Activated CD8-positive, alpha-beta T cell treated with anti-CD3 and anti-CD28 coated beads for 36 hours (primary cell): ENCODE measurements at regions of chr17 and their contacts with region 1.

Region 1: DNA sequence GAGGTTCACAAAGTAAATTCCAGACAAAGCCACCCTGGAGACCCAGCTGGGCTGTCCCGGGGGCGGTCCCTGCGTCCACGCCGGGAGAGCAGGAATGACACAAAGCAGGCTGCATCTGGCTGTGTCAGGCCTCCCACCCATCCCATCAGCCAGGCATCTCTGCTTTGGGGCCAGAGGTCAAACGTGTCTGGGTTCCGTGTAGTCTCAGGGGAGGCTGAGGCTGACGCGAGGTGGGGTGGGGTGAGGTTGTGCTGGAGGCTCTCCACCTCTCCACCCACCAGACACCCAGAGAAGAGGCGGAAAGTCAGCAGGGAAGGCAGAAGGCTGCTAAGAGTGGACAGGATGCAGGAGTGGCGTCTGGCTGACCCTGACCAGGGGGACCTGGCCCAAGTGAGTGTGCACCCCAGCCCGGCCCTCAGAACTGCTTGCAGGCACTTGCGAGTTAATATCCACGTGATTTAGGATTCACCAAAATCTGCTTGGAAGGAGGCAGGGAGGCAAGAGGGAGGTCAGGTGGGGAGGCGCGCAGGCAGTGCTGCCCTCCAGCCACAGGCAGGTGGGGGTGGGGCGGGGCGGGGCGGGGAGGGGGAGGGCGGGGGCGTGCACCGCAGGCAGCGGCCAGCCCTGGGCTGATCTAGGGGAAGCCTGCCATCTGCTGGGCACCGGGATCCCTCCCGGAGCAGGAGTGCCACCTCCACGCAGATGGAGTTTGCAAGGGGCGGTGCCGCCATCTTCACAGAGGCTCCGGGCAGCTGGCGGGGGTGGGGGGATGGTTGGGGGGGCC is 44.3 kb downstream of the TBC1D16 start:
- DNase-seq: peak; percentile 91
- ATAC-seq: peak; percentile 76
- H3K4me3 Mint-ChIP-seq: peak overlapping the region; percentile 80
- H3K27ac Mint-ChIP-seq: no peak overlapping the region
- H3K4me1 Mint-ChIP-seq: peaks cover 36% of the 10 kb centered on the region
- H3K27me3 Mint-ChIP-seq: no peaks in the 10 kb centered on the region
- CTCF ChIP-seq: peak; percentile 49

Region 2: DNA sequence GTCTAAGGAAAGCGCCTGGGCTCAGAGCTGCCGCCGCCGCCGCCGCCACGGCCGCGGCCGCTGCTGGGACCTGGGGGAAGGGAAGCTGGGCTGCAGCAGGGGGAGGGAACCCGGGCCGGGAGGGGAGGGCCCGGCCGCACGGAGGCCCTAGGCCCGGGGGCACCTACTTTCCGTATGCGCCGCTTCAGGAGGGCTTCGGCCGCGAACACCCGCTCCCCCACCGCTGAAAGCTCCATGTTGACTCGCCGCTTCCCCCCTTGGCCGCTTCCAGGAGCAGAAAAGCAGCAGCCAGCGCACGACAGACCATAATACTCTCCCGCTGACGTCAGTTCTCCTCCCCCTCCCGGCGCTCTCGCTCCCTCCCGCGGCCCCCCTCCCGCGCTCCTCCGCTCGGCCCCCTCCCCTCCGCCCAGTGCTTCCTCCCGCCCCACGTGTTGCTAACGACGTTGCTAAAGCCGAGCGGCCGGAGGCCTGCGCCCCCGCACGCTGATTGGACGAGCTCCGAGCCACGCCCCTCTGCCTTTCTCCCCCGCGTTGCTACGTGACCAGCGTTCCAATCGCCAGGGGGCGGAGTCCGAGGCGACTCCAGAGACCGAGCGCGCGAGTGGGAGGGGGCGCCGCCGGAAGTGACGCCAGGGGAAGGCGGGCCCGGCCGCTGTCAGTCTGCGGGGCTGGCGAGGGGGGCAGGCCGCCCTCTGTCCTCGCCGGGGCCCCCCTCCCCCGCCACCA is 194.4 kb before region 1 on chr17 and contains the start of gene CBX8:
- CTCF ChIA-PET with region 1: interaction called, 4 read pairs
- POLR2A ChIA-PET with region 1: no interaction called
- intact Hi-C with region 1: loop called (anchors 5 kb)
- DNase-seq: peak; percentile 100
- ATAC-seq: peak; percentile 87
- H3K4me3 Mint-ChIP-seq: peak within 1 kb of the TSS; percentile 82
- H3K27ac Mint-ChIP-seq: peak within 1 kb of the TSS; percentile 68
- H3K4me1 Mint-ChIP-seq: peaks cover 31% of the 10 kb centered on the region
- H3K27me3 Mint-ChIP-seq: peaks cover 37% of the 10 kb centered on the region
- CTCF ChIP-seq: no peak
- total RNA-seq, gene CBX8: 7.0 to 9.4 TPM

Region 3: GRCh38 chr17:79981086-79981485 is 10.2 kb before region 1 on chr17:
- CTCF ChIA-PET with region 1: no interaction called
- POLR2A ChIA-PET with region 1: no interaction called
- intact Hi-C with region 1: no loop called
- DNase-seq: no peak
- ATAC-seq: no peak
- H3K4me3 Mint-ChIP-seq: no peak overlapping the region
- H3K27ac Mint-ChIP-seq: no peak overlapping the region
- H3K4me1 Mint-ChIP-seq: no peaks in the 10 kb centered on the region
- H3K27me3 Mint-ChIP-seq: no peaks in the 10 kb centered on the region
- CTCF ChIP-seq: no peak